Activated CD8-positive, alpha-beta T cell treated with anti-CD3 and anti-CD28 coated beads for 36 hours (primary cell): ENCODE measurements at regions of chr16 and their contacts with region 1.

Region 1: DNA sequence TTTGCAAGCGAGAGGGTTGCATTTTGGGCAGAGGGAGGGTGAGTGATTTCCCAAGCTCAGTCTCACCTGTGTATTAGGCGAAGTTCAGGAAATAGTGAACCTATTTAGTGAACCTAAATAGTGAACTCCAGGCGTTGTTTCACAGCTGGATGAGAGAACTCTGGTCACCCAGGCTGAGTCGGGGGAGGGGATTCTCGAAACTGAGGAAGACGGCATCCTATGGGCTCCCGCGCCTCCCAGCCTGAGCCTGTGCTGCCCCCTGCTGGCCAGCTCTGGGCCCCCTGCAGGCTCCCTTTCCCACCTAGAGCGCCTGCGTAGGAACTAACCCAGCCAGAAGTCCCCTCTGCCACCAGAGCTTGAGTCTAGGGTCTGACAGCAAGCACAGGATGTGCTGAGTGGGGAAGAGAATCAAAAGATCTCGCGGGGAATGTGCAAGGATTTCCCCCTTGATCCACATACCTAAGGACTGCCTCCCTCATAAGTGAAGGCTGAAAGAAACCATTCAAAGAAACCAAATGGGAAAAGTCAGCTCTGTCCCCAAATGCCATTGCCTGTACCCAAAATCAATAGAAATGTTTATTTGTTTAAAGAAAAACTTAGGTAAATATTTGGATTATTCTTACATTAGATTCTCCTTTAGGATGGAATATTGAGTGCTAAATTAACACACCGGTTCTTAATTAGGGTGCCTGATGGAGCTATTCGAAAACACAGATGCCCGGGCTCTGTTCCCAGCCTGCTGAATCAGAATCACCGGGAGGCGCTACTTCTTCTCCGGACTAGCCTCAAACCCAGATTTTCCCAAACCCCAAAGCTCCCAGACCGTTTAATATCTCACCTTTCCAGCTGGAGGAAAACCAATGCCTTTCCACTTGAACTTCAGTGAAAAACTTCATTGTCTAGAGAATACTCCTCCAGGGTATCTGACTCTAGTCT is 14.8 kb upstream of the MARVELD3 start:
- DNase-seq: peak; percentile 87
- ATAC-seq: peak; percentile 86
- H3K4me3 Mint-ChIP-seq: no peak overlapping the region
- H3K27ac Mint-ChIP-seq: no peak overlapping the region
- H3K4me1 Mint-ChIP-seq: peaks cover 9% of the 10 kb centered on the region
- H3K27me3 Mint-ChIP-seq: peaks cover 19% of the 10 kb centered on the region
- CTCF ChIP-seq: peak; percentile 93

Region 2: GRCh38 chr16:71499775-71500364 is 111.3 kb before region 1 on chr16:
- CTCF ChIA-PET with region 1: interaction called, 27 read pairs
- POLR2A ChIA-PET with region 1: no interaction called
- intact Hi-C with region 1: no loop called
- DNase-seq: peak; percentile 67
- ATAC-seq: peak; percentile 79
- H3K4me3 Mint-ChIP-seq: no peak overlapping the region
- H3K27ac Mint-ChIP-seq: no peak overlapping the region
- H3K4me1 Mint-ChIP-seq: no peaks in the 10 kb centered on the region
- H3K27me3 Mint-ChIP-seq: peaks cover 1% of the 10 kb centered on the region
- CTCF ChIP-seq: peak; percentile 80

Region 3: GRCh38 chr16:71547168-71547567 is 64.0 kb before region 1 on chr16:
- CTCF ChIA-PET with region 1: interaction called, 23 read pairs
- POLR2A ChIA-PET with region 1: interaction called, 3 read pairs
- intact Hi-C with region 1: no loop called
- DNase-seq: no peak
- ATAC-seq: no peak
- H3K4me3 Mint-ChIP-seq: no peak overlapping the region
- H3K27ac Mint-ChIP-seq: no peak overlapping the region
- H3K4me1 Mint-ChIP-seq: no peaks in the 10 kb centered on the region
- H3K27me3 Mint-ChIP-seq: peaks cover 11% of the 10 kb centered on the region
- CTCF ChIP-seq: no peak

Region 4: DNA sequence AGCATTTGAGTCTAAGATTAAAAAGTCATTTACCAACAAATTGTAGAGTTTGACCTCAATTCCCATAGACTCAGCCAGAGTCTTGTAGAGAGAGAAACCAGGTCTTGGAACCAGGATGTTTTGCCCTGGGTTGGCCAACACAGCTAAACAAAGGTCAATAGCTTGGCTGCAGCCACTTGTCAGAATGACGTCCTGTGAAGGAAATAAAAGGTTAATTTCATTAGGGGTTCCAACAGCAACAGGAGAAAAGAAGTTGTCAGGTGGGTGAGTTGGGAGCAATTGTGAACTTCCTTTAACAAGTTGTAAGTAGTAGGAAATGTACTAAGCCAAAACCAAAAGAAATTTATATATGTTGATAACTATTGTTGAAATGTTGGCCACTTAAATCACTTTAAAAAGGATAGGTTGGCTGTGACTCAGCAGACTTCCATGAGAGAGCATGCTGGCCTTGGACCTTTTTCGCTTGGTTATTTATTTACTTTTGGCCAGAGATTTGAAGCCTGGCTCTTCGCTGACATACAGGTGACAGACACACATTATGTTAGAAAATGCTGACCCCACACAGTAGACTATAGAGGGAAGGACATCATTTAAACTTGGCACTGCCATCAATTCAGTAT is 38.6 kb before region 1 on chr16:
- CTCF ChIA-PET with region 1: interaction called, 87 read pairs
- POLR2A ChIA-PET with region 1: no interaction called
- intact Hi-C with region 1: loop called (anchors 5 kb)
- DNase-seq: no peak
- ATAC-seq: no peak
- H3K4me3 Mint-ChIP-seq: no peak overlapping the region
- H3K27ac Mint-ChIP-seq: no peak overlapping the region
- H3K4me1 Mint-ChIP-seq: no peaks in the 10 kb centered on the region
- H3K27me3 Mint-ChIP-seq: peaks cover 6% of the 10 kb centered on the region
- CTCF ChIP-seq: no peak

Region 5: GRCh38 chr16:71594000-71594646 is 17.1 kb before region 1 on chr16:
- CTCF ChIA-PET with region 1: interaction called, 14 read pairs
- POLR2A ChIA-PET with region 1: no interaction called
- intact Hi-C with region 1: no loop called
- DNase-seq: no peak
- ATAC-seq: no peak
- H3K4me3 Mint-ChIP-seq: no peak overlapping the region
- H3K27ac Mint-ChIP-seq: no peak overlapping the region
- H3K4me1 Mint-ChIP-seq: no peaks in the 10 kb centered on the region
- H3K27me3 Mint-ChIP-seq: peaks cover 19% of the 10 kb centered on the region
- CTCF ChIP-seq: no peak

Region 6: DNA sequence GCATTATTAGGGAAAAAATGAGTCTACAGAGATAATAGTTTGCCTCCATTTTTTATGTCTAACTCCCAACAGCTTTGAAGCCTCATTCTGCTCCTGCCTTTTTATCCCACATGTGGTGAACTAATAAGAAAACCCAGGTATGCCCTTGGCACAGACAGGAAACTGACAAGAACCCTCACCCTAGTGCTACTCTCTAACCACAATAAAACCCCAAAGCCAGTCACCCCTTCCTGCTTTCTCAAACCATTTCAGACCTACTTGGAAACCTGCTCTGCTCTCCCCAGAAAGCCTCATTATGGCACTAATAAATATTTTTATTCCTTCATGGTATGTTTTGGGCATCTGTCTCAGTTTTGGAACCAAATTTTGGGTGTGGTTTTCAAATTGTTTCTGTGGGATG is 10.9 kb after region 1 on chr16:
- CTCF ChIA-PET with region 1: interaction called, 33 read pairs
- POLR2A ChIA-PET with region 1: no interaction called
- intact Hi-C with region 1: no loop called
- DNase-seq: no peak
- ATAC-seq: no peak
- H3K4me3 Mint-ChIP-seq: no peak overlapping the region
- H3K27ac Mint-ChIP-seq: no peak overlapping the region
- H3K4me1 Mint-ChIP-seq: peaks cover 9% of the 10 kb centered on the region
- H3K27me3 Mint-ChIP-seq: peaks cover 19% of the 10 kb centered on the region
- CTCF ChIP-seq: no peak

Region 7: GRCh38 chr16:71709231-71709781 is 98.1 kb after region 1 on chr16:
- CTCF ChIA-PET with region 1: no interaction called
- POLR2A ChIA-PET with region 1: no interaction called
- intact Hi-C with region 1: no loop called
- DNase-seq: no peak
- ATAC-seq: no peak
- H3K4me3 Mint-ChIP-seq: no peak overlapping the region
- H3K27ac Mint-ChIP-seq: no peak overlapping the region
- H3K4me1 Mint-ChIP-seq: peaks cover 9% of the 10 kb centered on the region
- H3K27me3 Mint-ChIP-seq: no peaks in the 10 kb centered on the region
- CTCF ChIP-seq: no peak

Region 8: DNA sequence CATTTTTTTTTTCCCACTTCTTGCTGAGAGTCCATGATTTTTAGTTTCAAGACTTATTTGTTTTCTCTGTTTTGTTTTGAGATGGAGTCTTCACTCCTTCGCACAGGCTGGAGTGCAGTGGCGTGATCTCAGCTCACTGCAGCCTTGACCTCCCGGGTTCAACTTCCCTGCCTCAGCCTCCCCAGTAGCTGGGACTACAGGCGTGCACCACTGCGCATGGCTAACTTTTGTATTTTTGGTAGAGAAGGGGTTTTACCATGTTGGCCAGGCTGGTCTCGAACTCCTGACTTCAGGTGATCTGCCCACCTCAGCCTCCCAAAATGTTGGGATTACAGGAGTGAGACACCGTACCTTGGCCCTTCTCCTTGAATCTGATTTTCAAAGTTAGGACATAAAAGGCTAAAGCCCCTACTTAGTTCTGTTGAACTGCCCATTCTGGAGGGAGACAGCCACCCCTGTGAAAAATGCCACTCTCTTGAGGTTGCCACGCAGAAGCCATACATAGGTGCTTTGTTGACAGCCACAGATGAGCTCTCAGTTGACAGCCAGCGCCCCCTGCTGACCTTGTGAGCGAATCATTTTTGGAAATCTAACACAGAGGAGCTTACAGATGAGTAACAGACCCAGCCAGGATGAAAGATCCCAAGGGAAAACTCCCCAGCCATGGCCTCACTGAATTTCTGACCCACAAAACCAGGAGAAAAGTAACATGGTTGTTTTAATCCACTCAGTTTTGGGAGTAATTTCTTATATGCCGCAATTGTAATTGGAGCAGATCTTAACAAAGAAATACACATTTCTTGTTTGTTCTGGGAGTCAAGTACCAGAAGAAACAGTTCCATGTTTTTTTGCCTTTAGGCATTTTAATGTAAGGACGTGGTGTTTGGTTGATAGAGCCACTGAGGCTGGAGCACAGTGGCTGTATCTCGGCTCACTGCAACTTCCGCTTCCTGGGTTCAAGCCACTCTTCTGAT is 350.1 kb after region 1 on chr16:
- CTCF ChIA-PET with region 1: interaction called, 13 read pairs
- POLR2A ChIA-PET with region 1: no interaction called
- intact Hi-C with region 1: no loop called
- DNase-seq: peak; percentile 92
- ATAC-seq: peak; percentile 97
- H3K4me3 Mint-ChIP-seq: no peak overlapping the region
- H3K27ac Mint-ChIP-seq: no peak overlapping the region
- H3K4me1 Mint-ChIP-seq: peaks cover 3% of the 10 kb centered on the region
- H3K27me3 Mint-ChIP-seq: no peaks in the 10 kb centered on the region
- CTCF ChIP-seq: peak; percentile 90